Activated CD8-positive, alpha-beta T cell treated with anti-CD3 and anti-CD28 coated beads for 36 hours (primary cell): ENCODE measurements at regions of chr6 and their contacts with region 1.

Region 1: GRCh38 chr6:33620856-33621710 is at the start of gene ITPR3:
- DNase-seq: peak; percentile 80
- ATAC-seq: peak; percentile 86
- H3K4me3 Mint-ChIP-seq: peak within 1 kb of the TSS; percentile 88
- H3K27ac Mint-ChIP-seq: peak within 1 kb of the TSS; percentile 88
- H3K4me1 Mint-ChIP-seq: peaks cover 49% of the 10 kb centered on the region
- H3K27me3 Mint-ChIP-seq: no peaks in the 10 kb centered on the region
- CTCF ChIP-seq: no peak
- total RNA-seq, gene ITPR3: 36.6 to 38.0 TPM

Region 2: GRCh38 chr6:33458676-33459075 is 162.4 kb before region 1 on chr6:
- CTCF ChIA-PET with region 1: no interaction called
- POLR2A ChIA-PET with region 1: no interaction called
- intact Hi-C with region 1: no loop called
- DNase-seq: no peak
- ATAC-seq: no peak
- H3K4me3 Mint-ChIP-seq: no peak overlapping the region
- H3K27ac Mint-ChIP-seq: no peak overlapping the region
- H3K4me1 Mint-ChIP-seq: peaks cover 18% of the 10 kb centered on the region
- H3K27me3 Mint-ChIP-seq: no peaks in the 10 kb centered on the region
- CTCF ChIP-seq: no peak

Region 3: GRCh38 chr6:33579828-33580714 is 41.0 kb before region 1 on chr6 and contains the start of gene BAK1:
- CTCF ChIA-PET with region 1: interaction called, 19 read pairs
- POLR2A ChIA-PET with region 1: interaction called, 10 read pairs
- intact Hi-C with region 1: loop called (anchors 5 kb)
- DNase-seq: peak; percentile 93
- ATAC-seq: peak; percentile 97
- H3K4me3 Mint-ChIP-seq: peak within 1 kb of the TSS; percentile 83
- H3K27ac Mint-ChIP-seq: peak within 1 kb of the TSS; percentile 92
- H3K4me1 Mint-ChIP-seq: peaks cover 26% of the 10 kb centered on the region
- H3K27me3 Mint-ChIP-seq: no peaks in the 10 kb centered on the region
- CTCF ChIP-seq: peak; percentile 71
- total RNA-seq, gene BAK1: 33.8 to 34.3 TPM

Region 4: GRCh38 chr6:33633462-33634158 is 12.5 kb after region 1 on chr6:
- CTCF ChIA-PET with region 1: interaction called, 13 read pairs
- POLR2A ChIA-PET with region 1: interaction called, 25 read pairs
- intact Hi-C with region 1: no loop called
- DNase-seq: peak; percentile 54
- ATAC-seq: peak; percentile 83
- H3K4me3 Mint-ChIP-seq: peak overlapping the region; percentile 74
- H3K27ac Mint-ChIP-seq: no peak overlapping the region
- H3K4me1 Mint-ChIP-seq: peaks cover 46% of the 10 kb centered on the region
- H3K27me3 Mint-ChIP-seq: no peaks in the 10 kb centered on the region
- CTCF ChIP-seq: no peak

Region 5: GRCh38 chr6:33700391-33701050 is 79.4 kb after region 1 on chr6:
- CTCF ChIA-PET with region 1: interaction called, 14 read pairs
- POLR2A ChIA-PET with region 1: interaction called, 3 read pairs
- intact Hi-C with region 1: no loop called
- DNase-seq: peak; percentile 86
- ATAC-seq: peak; percentile 87
- H3K4me3 Mint-ChIP-seq: no peak overlapping the region
- H3K27ac Mint-ChIP-seq: peak overlapping the region; percentile 37
- H3K4me1 Mint-ChIP-seq: peaks cover 35% of the 10 kb centered on the region
- H3K27me3 Mint-ChIP-seq: no peaks in the 10 kb centered on the region
- CTCF ChIP-seq: peak; percentile 82

Region 6: GRCh38 chr6:33717934-33718455 is 96.9 kb after region 1 on chr6:
- CTCF ChIA-PET with region 1: no interaction called
- POLR2A ChIA-PET with region 1: no interaction called
- intact Hi-C with region 1: no loop called
- DNase-seq: no peak
- ATAC-seq: no peak
- H3K4me3 Mint-ChIP-seq: no peak overlapping the region
- H3K27ac Mint-ChIP-seq: no peak overlapping the region
- H3K4me1 Mint-ChIP-seq: no peaks in the 10 kb centered on the region
- H3K27me3 Mint-ChIP-seq: peaks cover 3% of the 10 kb centered on the region
- CTCF ChIP-seq: no peak